ENCODE measurements at regions of chr9 and their contacts with region 1.

Region 1: GRCh38 chr9:127586537-127586936 is 25.5 kb upstream of the STXBP1 start:
- DNase-seq: peak in 1 of 2 donors; percentile 92
- H3K4me3 ChIP-seq: no peak overlapping the region
- H3K27ac ChIP-seq: no peak overlapping the region
- H3K4me1 ChIP-seq: peaks cover 0 to 9% of the 10 kb centered on the region in 2 donors
- H3K27me3 ChIP-seq: no peaks in the 10 kb centered on the region
- CTCF ChIP-seq: peak; percentile 78 to 96 (median 89)

Region 2: GRCh38 chr9:127503947-127504782 is 82.4 kb before region 1 on chr9:
- intact Hi-C with region 1: loop called (anchors 1 kb)
- DNase-seq: peak; percentile 44 to 92
- H3K4me3 ChIP-seq: no peak overlapping the region
- H3K27ac ChIP-seq: peak overlapping the region; percentile 45 to 50
- H3K4me1 ChIP-seq: peaks cover 0 to 5% of the 10 kb centered on the region in 2 donors
- H3K27me3 ChIP-seq: no peaks in the 10 kb centered on the region
- CTCF ChIP-seq: peak; percentile 83 to 94 (median 87)

Region 3: GRCh38 chr9:127561619-127562500 is 24.7 kb before region 1 on chr9:
- intact Hi-C with region 1: loop called (anchors 1 kb)
- DNase-seq: peak; percentile 85 to 97
- H3K4me3 ChIP-seq: peak overlapping the region; percentile 1 to 17
- H3K27ac ChIP-seq: peak overlapping the region; percentile 85 to 90
- H3K4me1 ChIP-seq: peaks cover 30 to 54% of the 10 kb centered on the region in 2 donors
- H3K27me3 ChIP-seq: no peaks in the 10 kb centered on the region
- CTCF ChIP-seq: no peak

Region 4: GRCh38 chr9:127568971-127569885 is 17.3 kb before region 1 on chr9:
- intact Hi-C with region 1: loop called (anchors 2 kb)
- DNase-seq: peak; percentile 41 to 91
- H3K4me3 ChIP-seq: peak overlapping the region; percentile 97 to 99
- H3K27ac ChIP-seq: peak overlapping the region; percentile 94 to 96
- H3K4me1 ChIP-seq: peaks cover 24 to 47% of the 10 kb centered on the region in 2 donors
- H3K27me3 ChIP-seq: no peaks in the 10 kb centered on the region
- CTCF ChIP-seq: no peak